Activated CD4-positive, alpha-beta T cell treated with anti-CD3 and anti-CD28 coated beads, Interleukin-2, amount 10 ng/mL, durations not matched to agents 24 days and 14 days (primary cell): ENCODE measurements at regions of chr9 and their contacts with region 1.

Region 1: DNA sequence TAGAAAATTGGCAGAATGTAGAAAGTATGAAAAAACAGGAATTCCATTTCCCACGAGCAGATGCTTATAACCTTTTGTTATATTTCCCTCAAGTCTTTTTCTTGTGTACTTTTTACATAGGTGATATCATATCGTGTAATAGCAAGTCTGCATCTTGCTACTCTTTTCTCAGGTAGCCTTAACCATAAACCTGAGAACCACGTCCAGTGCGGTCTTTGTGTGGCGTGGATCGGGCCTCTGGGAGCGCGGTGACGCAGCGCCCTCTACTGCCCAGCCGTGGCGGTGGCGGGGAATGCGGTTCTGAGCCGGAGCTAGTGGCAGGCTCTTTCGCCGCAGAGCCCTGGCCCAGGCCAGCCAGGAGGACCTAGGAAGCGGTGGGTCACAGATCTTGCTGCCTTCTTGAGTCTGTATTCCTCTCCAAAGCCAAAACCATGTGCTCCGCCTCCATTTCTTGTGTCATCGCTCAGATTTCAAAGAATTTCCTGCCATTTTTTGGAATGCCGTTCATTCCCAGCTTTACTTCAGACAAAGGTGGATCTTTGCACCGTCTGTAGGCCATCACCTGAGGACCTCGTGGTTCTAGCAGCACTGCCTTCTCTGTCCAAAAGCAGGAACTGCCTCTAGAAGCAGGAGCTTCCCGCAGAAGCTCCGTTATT is 71.9 kb downstream of the MVB12B start:
- DNase-seq: peak; percentile 93
- H3K4me3 Mint-ChIP-seq: peak overlapping the region; percentile 22
- H3K27ac Mint-ChIP-seq: no peak overlapping the region
- H3K4me1 Mint-ChIP-seq: peaks cover 42% of the 10 kb centered on the region
- H3K27me3 Mint-ChIP-seq: peaks cover 9% of the 10 kb centered on the region

Region 2: GRCh38 chr9:125407974-125408900 is 990.3 kb before region 1 on chr9:
- intact Hi-C with region 1: loop called (anchors 5 kb)
- DNase-seq: peak; percentile 93
- H3K4me3 Mint-ChIP-seq: peak overlapping the region; percentile 80
- H3K27ac Mint-ChIP-seq: no peak overlapping the region
- H3K4me1 Mint-ChIP-seq: peaks cover 10% of the 10 kb centered on the region
- H3K27me3 Mint-ChIP-seq: peaks cover 14% of the 10 kb centered on the region

Region 3: DNA sequence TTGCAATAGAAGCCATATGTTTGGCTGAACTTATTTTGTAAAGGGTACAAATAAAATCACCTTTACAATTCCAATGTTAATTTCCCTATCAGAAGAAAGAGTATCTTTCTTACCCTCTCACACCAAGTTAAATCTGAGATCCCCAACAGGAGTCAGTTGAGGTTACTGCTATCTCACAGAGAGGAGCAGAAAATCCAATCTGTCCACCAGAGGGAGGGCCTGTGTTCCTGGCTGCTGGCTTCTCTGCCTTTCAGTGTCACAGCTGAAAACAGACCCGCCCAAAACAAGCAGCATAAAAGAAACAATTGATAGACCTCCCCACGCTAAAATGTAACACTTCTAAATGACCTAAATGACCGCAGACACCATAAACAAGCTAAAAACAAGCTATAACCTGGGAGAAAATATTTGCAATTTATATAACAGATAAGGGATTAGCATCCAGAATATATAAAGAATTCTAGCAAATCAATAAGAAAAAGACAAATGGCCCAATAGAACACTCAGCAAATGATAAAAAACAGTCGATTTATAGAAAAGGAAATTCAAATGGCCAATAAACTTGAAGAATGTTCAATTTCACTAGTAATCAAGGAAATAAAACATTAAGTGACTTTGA is 96.4 kb before region 1 on chr9:
- intact Hi-C with region 1: loop called (anchors 1 kb)
- DNase-seq: peak; percentile 88
- H3K4me3 Mint-ChIP-seq: no peak overlapping the region
- H3K27ac Mint-ChIP-seq: no peak overlapping the region
- H3K4me1 Mint-ChIP-seq: peaks cover 2% of the 10 kb centered on the region
- H3K27me3 Mint-ChIP-seq: peaks cover 8% of the 10 kb centered on the region

Region 4: GRCh38 chr9:126326228-126327005 is 72.1 kb before region 1 on chr9 and contains the start of gene MVB12B:
- intact Hi-C with region 1: loop called (anchors 5 kb)
- DNase-seq: peak; percentile 86
- H3K4me3 Mint-ChIP-seq: peak within 1 kb of the TSS; percentile 77
- H3K27ac Mint-ChIP-seq: peak within 1 kb of the TSS; percentile 34
- H3K4me1 Mint-ChIP-seq: peaks cover 10% of the 10 kb centered on the region
- H3K27me3 Mint-ChIP-seq: peaks cover 34% of the 10 kb centered on the region
- total RNA-seq, gene MVB12B: 0.49 and 1.3 TPM in 2 replicates

Region 5: GRCh38 chr9:126411225-126411947 is 12.9 kb after region 1 on chr9:
- intact Hi-C with region 1: loop called (anchors 1 kb)
- DNase-seq: peak; percentile 86
- H3K4me3 Mint-ChIP-seq: peak overlapping the region; percentile 47
- H3K27ac Mint-ChIP-seq: peak overlapping the region; percentile 45
- H3K4me1 Mint-ChIP-seq: peaks cover 39% of the 10 kb centered on the region
- H3K27me3 Mint-ChIP-seq: peaks cover 5% of the 10 kb centered on the region

Region 6: DNA sequence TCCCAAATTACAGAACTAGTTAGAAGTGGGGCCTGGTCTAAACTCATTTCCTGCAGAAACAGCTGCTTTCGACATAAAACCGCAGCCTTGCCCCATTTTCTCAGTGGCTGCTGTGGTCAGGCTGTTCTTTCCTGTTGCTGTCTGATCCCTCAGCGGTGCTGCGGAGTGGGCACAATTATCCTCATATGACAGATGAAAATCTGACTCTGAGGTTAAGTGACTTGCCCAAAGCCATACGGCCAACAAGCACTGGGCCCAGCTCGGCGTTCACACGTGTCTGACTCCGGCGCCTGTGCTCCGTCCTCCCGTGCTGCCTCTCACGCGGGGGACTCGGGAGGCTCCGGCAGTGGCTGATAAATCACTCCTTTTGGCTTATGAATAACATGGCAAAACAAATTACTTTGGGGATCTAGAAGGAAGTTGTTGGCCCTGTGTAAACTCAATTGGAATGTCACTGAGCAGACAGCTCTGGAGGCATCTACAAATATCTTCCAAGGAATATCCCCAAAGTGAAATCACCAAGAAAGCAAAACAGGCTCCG is 72.6 kb after region 1 on chr9:
- intact Hi-C with region 1: loop called (anchors 1 kb)
- DNase-seq: peak; percentile 94
- H3K4me3 Mint-ChIP-seq: peak overlapping the region; percentile 64
- H3K27ac Mint-ChIP-seq: peak overlapping the region; percentile 78
- H3K4me1 Mint-ChIP-seq: peaks cover 47% of the 10 kb centered on the region
- H3K27me3 Mint-ChIP-seq: peaks cover 52% of the 10 kb centered on the region

Region 7: GRCh38 chr9:126490871-126491567 is 92.5 kb after region 1 on chr9:
- intact Hi-C with region 1: loop called (anchors 5 kb)
- DNase-seq: peak; percentile 89
- H3K4me3 Mint-ChIP-seq: no peak overlapping the region
- H3K27ac Mint-ChIP-seq: no peak overlapping the region
- H3K4me1 Mint-ChIP-seq: no peaks in the 10 kb centered on the region
- H3K27me3 Mint-ChIP-seq: peaks cover 25% of the 10 kb centered on the region